ENCODE measurements at regions of chr15 and their contacts with region 1.

Region 1: DNA sequence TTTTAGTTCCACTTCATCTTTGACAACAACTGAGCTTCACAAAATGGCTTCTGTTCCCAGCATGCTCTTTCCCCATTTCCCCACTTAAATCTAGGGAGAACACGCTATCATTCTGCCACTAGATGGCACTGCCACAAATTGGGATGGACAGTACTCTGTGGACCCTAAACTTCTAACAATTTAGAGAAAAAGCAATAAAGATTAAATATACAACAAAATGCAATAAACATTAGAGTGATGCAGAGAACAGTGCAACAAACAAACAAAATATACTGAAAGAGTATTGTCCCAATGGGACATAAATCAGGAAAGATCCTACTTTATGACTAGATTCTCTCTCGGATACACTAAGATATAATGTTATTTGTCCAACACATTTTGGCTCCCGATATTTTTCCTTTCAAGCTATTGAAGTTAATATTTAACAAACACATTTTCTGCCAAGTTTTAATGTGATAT is 169.7 kb upstream of the TMCO5A start:
- DNase-seq: peak; percentile 25
- ATAC-seq: peak; percentile 77
- H3K4me3 Mint-ChIP-seq: no peak overlapping the region
- H3K27ac Mint-ChIP-seq: no peak overlapping the region
- H3K4me1 Mint-ChIP-seq: no peaks in the 10 kb centered on the region
- H3K27me3 Mint-ChIP-seq: peaks cover 3% of the 10 kb centered on the region; the same call in 1 of the 2 replicates
- CTCF ChIP-seq: peak; percentile 49

Region 2: DNA sequence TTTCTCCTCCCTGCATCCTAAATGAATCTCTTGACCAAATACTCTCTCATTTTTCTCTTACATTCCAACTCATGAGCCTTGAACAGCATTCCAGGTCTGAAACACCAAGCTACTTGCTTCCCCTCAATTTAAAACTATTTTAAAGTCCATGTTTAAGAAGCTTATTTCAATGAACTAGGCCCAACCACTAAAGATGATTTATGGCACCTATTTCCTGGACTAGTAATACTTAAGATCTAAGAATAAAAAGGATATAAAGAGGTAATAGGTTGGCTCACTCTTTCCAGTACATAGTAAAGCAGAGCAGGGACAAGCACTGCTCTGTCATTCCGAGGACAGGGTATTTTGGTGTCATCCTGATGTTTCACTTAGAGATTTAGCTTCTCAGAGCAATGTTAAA is 49.7 kb before region 1 on chr15:
- CTCF ChIA-PET with region 1: interaction called, 10 read pairs
- POLR2A ChIA-PET with region 1: no interaction called
- DNase-seq: no peak
- ATAC-seq: no peak
- H3K4me3 Mint-ChIP-seq: no peak overlapping the region
- H3K27ac Mint-ChIP-seq: no peak overlapping the region
- H3K4me1 Mint-ChIP-seq: 0 out of 2 replicates have a peak, but pooled peaks cover 4% of the 10 kb centered on the region
- H3K27me3 Mint-ChIP-seq: no peaks in the 10 kb centered on the region; the same call in 1 of the 2 replicates
- CTCF ChIP-seq: no peak

Region 3: DNA sequence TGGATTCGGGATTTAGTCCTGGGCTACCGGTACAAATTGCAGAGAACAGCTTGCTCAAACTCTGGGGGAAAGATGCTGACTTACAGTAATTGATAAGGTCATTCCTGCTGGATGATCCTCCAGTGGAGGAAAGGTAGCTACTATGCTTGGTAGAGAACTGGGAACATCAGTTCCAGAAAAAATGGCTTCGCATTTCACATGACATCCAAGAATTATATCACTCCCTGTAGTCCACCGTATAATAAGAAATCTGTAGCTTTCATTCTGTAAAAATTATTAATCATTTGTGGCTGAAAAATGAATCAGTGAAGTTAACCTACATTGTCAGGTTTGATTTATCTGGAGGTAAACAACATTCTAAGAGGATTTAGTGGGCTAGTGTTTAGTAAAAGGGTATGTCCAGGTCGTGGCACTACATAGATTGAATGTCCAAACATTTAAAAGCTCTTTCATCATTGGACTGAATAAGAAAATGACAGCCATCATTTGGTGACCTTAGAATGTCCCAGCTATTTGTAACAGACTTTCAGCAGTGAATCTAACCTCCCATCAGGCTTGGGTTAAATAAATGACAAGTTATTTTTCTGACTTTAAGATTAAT is 33.5 kb before region 1 on chr15:
- CTCF ChIA-PET with region 1: interaction called, 13 read pairs
- POLR2A ChIA-PET with region 1: no interaction called
- DNase-seq: no peak
- ATAC-seq: no peak
- H3K4me3 Mint-ChIP-seq: no peak overlapping the region
- H3K27ac Mint-ChIP-seq: no peak overlapping the region
- H3K4me1 Mint-ChIP-seq: no peaks in the 10 kb centered on the region
- H3K27me3 Mint-ChIP-seq: no peaks in the 10 kb centered on the region
- CTCF ChIP-seq: no peak

Region 4: GRCh38 chr15:37793851-37794250 is 29.1 kb after region 1 on chr15:
- CTCF ChIA-PET with region 1: interaction called, 11 read pairs
- POLR2A ChIA-PET with region 1: no interaction called
- DNase-seq: no peak
- ATAC-seq: peak; percentile 44; the same call in 1 of the 2 replicates
- H3K4me3 Mint-ChIP-seq: no peak overlapping the region
- H3K27ac Mint-ChIP-seq: no peak overlapping the region
- H3K4me1 Mint-ChIP-seq: peaks cover 16% of the 10 kb centered on the region
- H3K27me3 Mint-ChIP-seq: no peaks in the 10 kb centered on the region
- CTCF ChIP-seq: no peak

Region 5: DNA sequence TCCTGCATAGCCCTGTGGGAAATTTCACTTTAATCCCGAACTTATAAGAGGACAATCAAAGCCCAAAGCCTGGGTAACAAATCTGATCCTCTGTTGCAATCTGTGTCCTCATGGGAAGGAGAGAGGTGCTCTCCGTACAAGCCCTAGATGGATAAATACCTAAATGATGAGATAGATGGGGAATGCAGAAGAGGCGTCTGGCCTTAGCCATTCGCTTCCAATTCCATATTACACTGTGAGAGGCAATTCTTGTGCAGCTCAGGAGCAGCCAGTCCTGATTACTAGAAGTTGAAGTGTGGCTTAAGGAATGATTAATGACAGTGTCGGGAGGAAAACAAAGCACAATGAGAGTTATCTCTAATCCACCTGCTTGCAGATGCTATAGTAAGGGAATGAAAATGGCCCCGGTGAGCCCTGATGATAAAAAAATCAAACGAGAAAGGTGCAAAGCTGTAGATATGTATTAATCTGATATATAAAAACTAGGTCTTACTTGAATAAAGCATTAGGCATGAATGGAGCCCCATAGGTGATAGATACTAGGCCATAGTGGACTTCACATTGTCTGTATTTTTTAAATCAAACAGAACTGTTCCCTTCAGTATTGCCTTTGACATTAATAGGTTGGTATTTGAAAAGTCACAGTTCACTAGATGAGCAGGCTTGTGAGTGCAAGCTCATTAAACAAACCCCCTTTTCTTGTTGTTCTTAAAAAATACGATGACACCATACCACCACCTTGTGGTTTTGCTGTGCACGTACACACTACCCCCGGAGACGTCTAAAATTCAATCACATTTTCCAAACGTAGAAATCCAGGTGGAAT is 115.5 kb after region 1 on chr15:
- CTCF ChIA-PET with region 1: interaction called, 16 read pairs
- POLR2A ChIA-PET with region 1: no interaction called
- DNase-seq: no peak
- ATAC-seq: peak; percentile 85
- H3K4me3 Mint-ChIP-seq: no peak overlapping the region
- H3K27ac Mint-ChIP-seq: peak overlapping the region; percentile 7; the same call in 1 of the 2 replicates
- H3K4me1 Mint-ChIP-seq: peaks cover 7% of the 10 kb centered on the region
- H3K27me3 Mint-ChIP-seq: no peaks in the 10 kb centered on the region
- CTCF ChIP-seq: peak; percentile 61

Region 6: DNA sequence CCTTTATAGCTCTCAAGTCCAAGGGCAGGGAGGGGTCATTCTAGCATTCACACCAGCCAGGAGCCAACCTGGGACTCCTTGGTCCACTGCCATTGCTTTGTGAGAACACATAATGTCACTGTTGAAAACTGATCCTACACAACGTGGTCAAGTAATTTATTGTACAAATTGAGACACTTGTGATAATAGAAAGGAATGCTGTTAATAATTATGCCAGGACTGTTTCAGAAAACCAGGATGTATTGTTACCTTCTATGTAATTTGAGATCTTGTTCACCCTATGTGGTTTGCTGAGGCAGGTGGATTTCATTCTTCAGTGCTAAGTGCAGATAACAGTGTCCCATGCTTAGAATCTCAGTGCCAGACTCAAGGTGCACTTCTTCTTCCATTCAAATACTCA is 203.0 kb after region 1 on chr15:
- CTCF ChIA-PET with region 1: no interaction called
- POLR2A ChIA-PET with region 1: no interaction called
- DNase-seq: no peak
- ATAC-seq: no peak
- H3K4me3 Mint-ChIP-seq: no peak overlapping the region
- H3K27ac Mint-ChIP-seq: no peak overlapping the region
- H3K4me1 Mint-ChIP-seq: no peaks in the 10 kb centered on the region
- H3K27me3 Mint-ChIP-seq: no peaks in the 10 kb centered on the region
- CTCF ChIP-seq: no peak

Measured in WTC11 (cell line).